AG04449 (cell line): ENCODE measurements at regions of chr5 and their contacts with region 1.

Region 1: DNA sequence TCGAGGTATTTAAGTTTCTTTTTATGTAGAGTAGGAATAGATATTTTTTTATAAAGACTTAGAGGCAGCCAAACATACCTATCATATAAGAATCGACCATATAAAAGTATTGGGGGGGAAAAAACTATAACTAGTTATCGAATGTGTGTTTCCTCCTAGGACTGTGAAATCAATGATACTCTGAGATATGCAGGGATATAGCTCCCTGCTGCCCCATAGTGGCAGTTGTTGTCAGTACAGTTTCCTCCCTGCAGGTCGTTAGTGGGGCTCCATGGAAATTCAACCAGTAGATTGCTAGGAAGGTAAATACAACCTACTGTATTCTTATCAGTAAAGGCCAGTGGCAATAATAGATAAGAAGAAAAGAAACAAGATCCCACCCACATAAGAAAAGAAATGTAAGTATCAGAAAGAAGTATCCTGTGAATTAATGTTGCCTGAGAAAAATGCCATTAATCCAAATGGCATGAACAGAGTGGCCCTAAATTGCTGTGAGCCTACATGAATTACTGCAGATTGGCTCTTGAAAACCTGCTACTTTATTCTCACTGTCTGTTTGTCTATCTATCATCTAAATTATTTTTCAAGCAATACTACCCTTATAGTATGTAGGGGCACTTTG is 136.9 kb upstream of the FBN2 start:
- DNase-seq: no peak
- H3K4me3 ChIP-seq: no peak overlapping the region
- CTCF ChIP-seq: peak; percentile 76

Region 2: GRCh38 chr5:128498844-128499455 is 176.0 kb before region 1 on chr5:
- CTCF ChIA-PET with region 1: interaction called, 10 read pairs
- POLR2A ChIA-PET with region 1: no interaction called
- DNase-seq: no peak
- H3K4me3 ChIP-seq: no peak overlapping the region
- CTCF ChIP-seq: peak; percentile 20

Region 3: GRCh38 chr5:128522336-128522735 is 152.6 kb before region 1 on chr5:
- CTCF ChIA-PET with region 1: interaction called, 15 read pairs
- POLR2A ChIA-PET with region 1: no interaction called
- DNase-seq: no peak
- H3K4me3 ChIP-seq: no peak overlapping the region
- CTCF ChIP-seq: no peak

Region 4: GRCh38 chr5:128538250-128539037 is 136.5 kb before region 1 on chr5:
- CTCF ChIA-PET with region 1: interaction called, 76 read pairs
- POLR2A ChIA-PET with region 1: interaction called, 10 read pairs
- DNase-seq: peak; percentile 55
- H3K4me3 ChIP-seq: peak overlapping the region; percentile 91
- CTCF ChIP-seq: no peak

Region 5: DNA sequence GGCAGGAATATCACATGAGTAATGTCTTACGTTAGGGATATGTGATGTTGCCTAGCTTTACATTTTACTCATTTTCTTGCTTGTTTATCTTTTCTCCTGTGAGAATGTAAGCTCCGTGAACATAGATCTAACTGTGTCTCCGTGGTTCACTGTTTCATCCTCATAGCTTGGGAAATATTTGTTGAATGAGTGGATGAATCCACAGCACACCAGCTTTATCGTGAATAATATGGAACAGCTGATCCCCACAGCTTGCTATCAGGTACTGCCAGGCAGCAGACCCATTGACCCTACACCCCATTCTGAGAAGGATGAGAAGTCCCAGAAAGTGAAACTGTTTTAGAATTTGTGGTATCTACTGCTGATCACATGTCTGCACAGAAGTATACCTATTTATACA is 30.1 kb before region 1 on chr5:
- CTCF ChIA-PET with region 1: interaction called, 29 read pairs
- POLR2A ChIA-PET with region 1: interaction called, 5 read pairs
- DNase-seq: no peak
- H3K4me3 ChIP-seq: peak overlapping the region; percentile 20
- CTCF ChIP-seq: no peak